SK-N-SH (cell line): ENCODE measurements at regions of chr1 and their contacts with region 1.

Region 1: GRCh38 chr1:173202430-173203145 is 4.5 kb downstream of the TNFSF4 start:
- DNase-seq: peak; percentile 8
- H3K4me3 ChIP-seq: peak overlapping the region in 1 of 2 experiments; percentile 39; a peak in 1 of 4 replicates
- H3K27ac ChIP-seq: peak overlapping the region; percentile 24 to 82; a peak in 3 of 4 replicates
- H3K4me1 ChIP-seq: peaks cover 0 to 6% of the 10 kb centered on the region in 2 experiments; a peak in 3 of 4 replicates
- H3K27me3 ChIP-seq: no peaks in the 10 kb centered on the region
- CTCF ChIP-seq: peak; percentile 81
- EP300 ChIP-seq: 0 out of 4 replicates have a peak, but pooled peaks of 1 of the 2 experiments have one; percentile 25
- RAD21 ChIP-seq: peak; percentile 82

Region 2: DNA sequence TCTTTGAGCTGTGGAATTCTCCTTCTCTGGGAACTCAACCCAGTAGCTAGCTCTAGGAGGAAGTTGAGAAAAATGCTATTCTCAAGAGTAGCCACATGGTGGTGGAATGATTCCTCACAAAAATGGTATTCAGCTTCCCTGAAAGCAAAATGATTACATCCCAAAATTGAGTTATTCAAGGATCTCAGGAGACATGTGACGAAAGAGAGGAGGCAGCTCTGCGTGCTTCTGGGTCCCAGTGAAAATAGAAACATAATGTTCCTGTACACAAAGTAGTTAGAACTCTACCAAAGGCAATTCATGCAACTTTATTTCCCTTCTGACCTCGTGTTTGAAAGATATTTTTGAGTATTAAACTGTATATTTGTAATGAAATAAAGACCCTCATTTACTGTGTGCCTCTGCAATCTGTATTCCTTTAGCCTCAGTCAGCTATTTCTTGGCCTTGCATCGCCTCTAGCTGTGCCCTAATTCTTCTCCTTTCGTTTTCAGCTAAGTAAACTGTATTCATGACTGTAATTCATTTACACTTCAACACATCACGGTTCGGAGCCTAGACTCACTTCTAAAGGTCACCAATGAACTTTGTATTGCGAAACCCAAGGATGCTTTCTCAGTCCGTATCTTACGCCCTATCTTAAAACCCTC is 376.4 kb before region 1 on chr1:
- CTCF ChIA-PET with region 1: interaction called, 44 read pairs
- POLR2A ChIA-PET with region 1: no interaction called
- DNase-seq: peak; percentile 38
- H3K4me3 ChIP-seq: no peak overlapping the region
- H3K27ac ChIP-seq: peak overlapping the region in 1 of 2 experiments; percentile 86; a peak in 1 of 4 replicates
- H3K4me1 ChIP-seq: peaks cover 0 to 7% of the 10 kb centered on the region in 2 experiments; a peak in 2 of 4 replicates
- H3K27me3 ChIP-seq: no peaks in the 10 kb centered on the region
- CTCF ChIP-seq: peak; percentile 79
- EP300 ChIP-seq: 0 out of 4 replicates have a peak, but pooled peaks of 1 of the 2 experiments have one; percentile 17
- RAD21 ChIP-seq: peak; percentile 85

Region 3: DNA sequence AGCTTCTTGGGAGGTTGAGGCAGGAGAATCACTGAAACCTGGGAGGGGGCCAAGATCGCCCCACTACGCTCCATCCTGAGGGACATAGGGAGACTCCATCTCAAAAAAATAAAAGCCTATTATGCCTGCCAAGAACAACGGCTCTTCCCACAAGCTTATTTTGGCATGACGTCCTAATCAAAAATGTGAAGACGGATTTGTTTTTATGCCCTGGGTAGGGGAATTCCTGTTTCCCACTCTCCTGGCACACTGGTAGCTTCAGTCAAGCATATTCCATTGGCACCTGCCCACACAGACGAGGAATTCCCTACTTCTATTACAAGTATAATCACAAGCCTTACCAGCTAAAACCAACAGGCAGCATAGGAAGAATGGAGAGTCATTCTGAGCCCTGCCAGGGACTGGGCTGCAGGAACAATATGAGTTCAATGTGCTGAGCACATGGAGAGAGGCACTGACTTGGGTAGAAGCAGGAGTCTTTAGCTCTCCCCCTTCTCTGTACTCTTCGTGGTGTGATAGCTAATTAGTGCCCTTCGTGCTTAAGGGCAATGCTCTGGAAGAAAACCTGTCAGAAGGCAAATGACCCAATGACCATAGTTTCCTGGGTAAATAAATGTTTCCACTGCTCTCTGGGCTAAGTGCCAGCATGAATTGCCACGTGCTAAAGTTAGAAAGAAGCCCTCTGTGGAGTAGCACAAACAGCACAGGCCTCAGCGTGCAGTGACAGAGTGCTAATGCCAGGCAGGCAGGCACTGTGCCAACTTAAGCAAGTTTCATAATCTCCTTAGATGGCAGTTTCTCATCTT is 12.3 kb before region 1 on chr1:
- CTCF ChIA-PET with region 1: interaction called, 13 read pairs
- POLR2A ChIA-PET with region 1: no interaction called
- DNase-seq: no peak
- H3K4me3 ChIP-seq: no peak overlapping the region
- H3K27ac ChIP-seq: peak overlapping the region in 1 of 2 experiments; percentile 63; a peak in 1 of 4 replicates
- H3K4me1 ChIP-seq: peaks cover 6 to 8% of the 10 kb centered on the region in 2 experiments; a peak in 3 of 4 replicates
- H3K27me3 ChIP-seq: no peaks in the 10 kb centered on the region
- CTCF ChIP-seq: no peak
- EP300 ChIP-seq: no peak
- RAD21 ChIP-seq: no peak

Region 4: DNA sequence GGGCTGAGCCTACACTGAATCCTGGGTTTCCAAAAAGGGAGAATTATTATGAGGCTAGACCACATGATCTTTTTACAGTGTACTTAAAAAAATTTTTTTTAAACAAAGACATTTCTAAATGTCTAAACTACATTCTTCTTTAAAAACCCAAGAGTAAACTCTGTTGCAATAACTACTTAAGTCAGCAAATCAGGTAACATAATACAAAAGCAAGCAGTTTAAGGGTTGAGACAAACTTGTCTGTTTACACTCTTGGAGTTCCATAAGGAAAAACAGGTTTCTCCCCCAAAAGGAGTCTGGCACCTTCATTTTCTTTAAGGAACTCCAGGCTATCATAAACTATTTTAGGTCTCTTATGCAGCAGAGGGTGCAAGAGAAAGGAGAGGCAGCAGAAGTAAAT is 479.6 kb after region 1 on chr1:
- CTCF ChIA-PET with region 1: no interaction called
- POLR2A ChIA-PET with region 1: no interaction called
- DNase-seq: no peak
- H3K4me3 ChIP-seq: no peak overlapping the region
- H3K27ac ChIP-seq: no peak overlapping the region
- H3K4me1 ChIP-seq: no peaks in the 10 kb centered on the region
- H3K27me3 ChIP-seq: no peaks in the 10 kb centered on the region
- CTCF ChIP-seq: no peak
- EP300 ChIP-seq: no peak
- RAD21 ChIP-seq: no peak